CD8-positive, alpha-beta T cell (primary cell): ENCODE measurements at regions of chr1 and their contacts with region 1.

Region 1: DNA sequence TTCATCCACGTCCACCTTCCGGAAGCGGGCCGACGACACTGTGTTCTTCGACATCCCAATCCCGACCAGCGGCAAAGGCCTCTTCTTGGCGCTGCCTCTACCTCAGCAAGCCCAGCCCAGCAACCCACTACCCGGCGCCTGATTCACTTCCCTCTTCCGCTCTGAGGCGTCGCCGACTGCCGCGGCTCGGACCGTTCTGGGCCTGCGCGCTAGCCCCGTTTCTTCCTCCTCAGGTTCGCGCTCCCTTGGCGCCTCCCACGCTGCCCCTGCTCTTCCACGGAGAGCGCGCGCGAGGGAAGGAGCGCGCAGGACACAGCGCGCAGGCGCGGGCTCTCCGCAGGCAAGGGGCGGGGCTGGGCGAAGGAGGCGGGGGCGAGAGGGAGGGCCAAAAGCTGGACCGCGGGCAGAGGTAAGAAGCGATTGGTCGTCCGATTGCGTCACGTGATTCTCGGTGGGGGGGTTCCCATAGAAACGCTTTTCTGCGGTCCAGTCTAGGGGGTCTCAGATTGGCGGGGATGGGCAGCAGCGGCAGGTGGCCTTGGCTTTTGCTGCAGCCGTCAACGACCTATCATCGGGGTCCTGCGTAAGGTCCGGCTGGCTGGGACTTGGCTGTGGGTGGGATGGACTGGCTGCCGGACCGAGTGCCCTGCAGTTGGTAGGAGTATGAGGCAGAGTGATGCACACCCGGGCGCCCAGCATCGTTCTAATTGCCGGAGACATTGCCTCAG is at the start of gene ARPC5:
- DNase-seq: peak; percentile 89 to 98 (median 94)
- ATAC-seq: peak; percentile 85
- H3K4me3 ChIP-seq: peak within 1 kb of the TSS; percentile 82 to 94
- H3K4me3 Mint-ChIP-seq: peak within 1 kb of the TSS; percentile 100
- H3K27ac ChIP-seq: peak within 1 kb of the TSS; percentile 61 to 82
- H3K27ac Mint-ChIP-seq: peak within 1 kb of the TSS; percentile 99
- H3K4me1 ChIP-seq: peaks cover 31% of the 10 kb centered on the region
- H3K4me1 Mint-ChIP-seq: peaks cover 47% of the 10 kb centered on the region
- H3K27me3 ChIP-seq: no peaks in the 10 kb centered on the region
- H3K27me3 Mint-ChIP-seq: no peaks in the 10 kb centered on the region
- CTCF ChIP-seq: no peak
- total RNA-seq, gene ARPC5: 14.2 to 17.1 TPM

Region 2: DNA sequence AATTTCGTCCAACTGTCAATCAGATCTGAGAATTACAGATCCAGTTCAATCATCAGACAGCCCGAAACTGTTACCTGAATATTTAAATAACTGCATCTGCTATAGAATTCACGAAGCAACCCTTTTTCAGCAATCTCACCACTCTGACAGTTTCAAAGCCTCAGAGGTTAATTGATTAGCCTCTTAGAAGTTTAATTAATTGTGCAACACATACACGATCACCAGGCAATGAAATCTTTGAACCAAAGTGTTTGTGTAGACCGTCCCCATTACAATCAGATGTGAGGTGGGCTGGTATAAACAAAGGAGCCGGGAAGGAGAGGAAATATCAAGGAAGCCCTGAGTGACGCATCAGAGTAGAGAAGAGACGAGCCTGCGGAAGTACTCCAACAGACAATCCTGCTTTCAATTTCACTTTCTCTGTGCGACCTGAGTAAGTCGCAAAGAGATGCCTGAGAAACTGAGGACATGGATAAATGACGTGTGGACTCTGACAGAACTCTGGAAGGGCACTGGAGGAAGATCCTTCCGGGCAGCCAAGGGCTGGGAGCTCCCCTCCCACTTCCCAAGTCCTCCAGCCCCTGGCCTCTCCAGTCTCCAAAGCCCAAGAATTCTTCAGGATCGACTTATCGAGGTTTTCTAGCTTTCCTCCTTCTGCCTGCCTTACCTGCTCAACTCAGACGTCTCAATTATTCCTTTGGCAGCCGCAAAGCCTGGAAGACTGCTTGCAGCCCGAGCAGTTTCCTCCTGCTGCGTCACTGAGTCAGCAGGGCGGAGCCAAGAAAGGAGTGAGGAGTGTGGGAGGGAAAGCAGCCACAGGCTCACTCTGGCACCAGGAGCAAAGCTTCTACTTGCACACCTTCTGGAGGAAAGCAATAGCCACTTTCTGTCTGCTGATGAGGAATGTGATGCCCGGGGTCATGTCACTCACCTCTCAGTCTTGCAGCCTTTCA is 1047.0 kb before region 1 on chr1 and contains the start of gene RNASEL:
- CTCF ChIA-PET with region 1: no interaction called
- POLR2A ChIA-PET with region 1: no interaction called
- intact Hi-C with region 1: loop called in 1 of 2 experiments (anchors 5 kb)
- DNase-seq: peak; percentile 24 to 87 (median 51)
- ATAC-seq: peak; percentile 92
- H3K4me3 ChIP-seq: peak within 1 kb of the TSS; percentile 78 to 95
- H3K4me3 Mint-ChIP-seq: peak within 1 kb of the TSS; percentile 94
- H3K27ac ChIP-seq: peak within 1 kb of the TSS; percentile 96 to 99
- H3K27ac Mint-ChIP-seq: peak within 1 kb of the TSS; percentile 99
- H3K4me1 ChIP-seq: peaks cover 44% of the 10 kb centered on the region
- H3K4me1 Mint-ChIP-seq: peaks cover 52% of the 10 kb centered on the region
- H3K27me3 ChIP-seq: no peaks in the 10 kb centered on the region
- H3K27me3 Mint-ChIP-seq: peaks cover 3% of the 10 kb centered on the region
- CTCF ChIP-seq: no peak
- total RNA-seq, gene RNASEL: 1.5 to 1.7 TPM

Region 3: DNA sequence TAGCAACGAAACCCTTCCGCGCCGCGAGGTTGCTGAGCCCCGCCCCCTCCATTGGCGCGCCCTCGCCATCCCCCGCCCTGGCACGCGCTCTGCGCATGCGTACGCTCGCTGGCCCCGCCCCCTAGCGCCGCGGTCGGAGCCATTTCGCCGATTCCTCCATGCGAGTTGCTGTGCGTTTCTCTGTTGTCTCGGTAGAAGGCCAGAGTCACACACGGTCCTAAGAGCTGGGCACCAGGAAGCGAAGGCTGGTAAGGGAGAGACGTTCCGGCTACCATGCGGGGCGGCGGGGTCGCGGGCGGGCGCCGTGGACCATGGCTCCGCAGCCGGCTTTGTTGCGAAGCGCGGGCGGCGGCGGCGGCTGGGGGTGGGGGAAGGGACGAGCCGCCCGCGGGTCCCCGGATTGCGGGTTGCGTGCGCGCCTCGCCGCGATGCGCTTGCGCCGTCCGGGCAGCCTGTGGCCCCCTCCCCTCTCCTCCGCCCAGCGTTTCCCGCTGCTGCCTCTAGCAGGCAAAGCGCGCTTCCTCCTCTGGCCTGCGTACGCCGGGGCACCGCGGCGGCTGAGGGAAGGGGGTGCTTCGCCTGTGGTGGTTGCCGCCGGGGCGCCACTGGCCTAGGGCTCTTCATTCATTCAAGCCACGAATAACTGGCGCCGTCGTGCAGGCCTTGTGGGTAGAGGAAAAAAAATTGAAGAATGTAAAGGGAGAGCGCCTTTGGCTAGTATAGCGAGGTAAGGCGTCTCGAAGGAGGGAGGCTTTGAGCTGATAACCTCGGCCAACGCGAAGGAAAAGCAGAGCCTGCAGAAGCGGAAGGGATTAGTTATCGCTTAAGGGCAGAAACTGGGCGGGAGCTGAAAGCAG is 796.3 kb before region 1 on chr1 and contains the start of gene DHX9:
- CTCF ChIA-PET with region 1: no interaction called
- POLR2A ChIA-PET with region 1: interaction called, 3 read pairs
- intact Hi-C with region 1: loop called in 1 of 2 experiments (anchors 5 kb)
- DNase-seq: peak; percentile 93 to 99 (median 96)
- ATAC-seq: peak; percentile 84
- H3K4me3 ChIP-seq: peak within 1 kb of the TSS; percentile 69 to 87
- H3K4me3 Mint-ChIP-seq: peak within 1 kb of the TSS; percentile 95
- H3K27ac ChIP-seq: peak within 1 kb of the TSS; percentile 66 to 86
- H3K27ac Mint-ChIP-seq: peak within 1 kb of the TSS; percentile 98
- H3K4me1 ChIP-seq: peaks cover 36% of the 10 kb centered on the region
- H3K4me1 Mint-ChIP-seq: peaks cover 49% of the 10 kb centered on the region
- H3K27me3 ChIP-seq: no peaks in the 10 kb centered on the region
- H3K27me3 Mint-ChIP-seq: no peaks in the 10 kb centered on the region
- CTCF ChIP-seq: peak; percentile 28
- total RNA-seq, gene DHX9: 374 to 382 TPM

Region 4: GRCh38 chr1:183674339-183674738 is 38.6 kb after region 1 on chr1:
- CTCF ChIA-PET with region 1: no interaction called
- POLR2A ChIA-PET with region 1: no interaction called
- intact Hi-C with region 1: no loop called
- DNase-seq: no peak
- ATAC-seq: no peak
- H3K4me3 ChIP-seq: no peak overlapping the region
- H3K4me3 Mint-ChIP-seq: no peak overlapping the region
- H3K27ac ChIP-seq: no peak overlapping the region
- H3K27ac Mint-ChIP-seq: no peak overlapping the region
- H3K4me1 ChIP-seq: no peaks in the 10 kb centered on the region
- H3K4me1 Mint-ChIP-seq: no peaks in the 10 kb centered on the region
- H3K27me3 ChIP-seq: no peaks in the 10 kb centered on the region
- H3K27me3 Mint-ChIP-seq: peaks cover 12% of the 10 kb centered on the region
- CTCF ChIP-seq: no peak

Region 5: DNA sequence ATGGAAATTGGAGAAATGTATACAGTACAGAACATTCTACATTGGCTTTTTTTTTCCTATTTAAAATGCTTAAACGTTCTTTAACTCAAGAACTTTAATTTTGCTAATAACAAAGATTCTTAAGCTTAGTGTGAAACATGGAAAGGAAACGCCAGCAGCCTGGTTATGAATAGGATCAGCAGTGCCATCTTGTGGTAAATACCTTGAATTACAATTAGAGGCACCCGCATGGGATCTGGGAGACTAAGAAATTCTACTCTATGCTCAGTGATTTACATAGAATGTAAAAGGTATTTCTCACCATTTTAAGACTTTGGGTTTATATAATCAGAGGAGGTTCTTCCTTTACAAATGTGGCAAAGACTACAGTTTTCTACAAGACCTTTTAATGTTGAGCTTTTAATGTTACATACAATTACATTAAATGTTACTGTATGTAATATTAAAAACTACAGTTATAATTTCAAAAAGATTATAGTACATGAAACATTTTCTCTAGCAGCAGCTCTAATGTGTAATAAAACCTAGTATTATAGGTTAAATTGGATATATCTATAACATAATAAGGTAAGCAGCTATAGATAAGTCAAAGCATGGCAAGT is 49.4 kb after region 1 on chr1:
- CTCF ChIA-PET with region 1: interaction called, 6 read pairs
- POLR2A ChIA-PET with region 1: no interaction called
- intact Hi-C with region 1: loop called in 1 of 2 experiments (anchors 1 kb)
- DNase-seq: peak in 3 of 9 experiments; percentile 18 to 69 (median 58)
- ATAC-seq: peak; percentile 83
- H3K4me3 ChIP-seq: no peak overlapping the region
- H3K4me3 Mint-ChIP-seq: no peak overlapping the region
- H3K27ac ChIP-seq: no peak overlapping the region
- H3K27ac Mint-ChIP-seq: no peak overlapping the region
- H3K4me1 ChIP-seq: no peaks in the 10 kb centered on the region
- H3K4me1 Mint-ChIP-seq: peaks cover 4% of the 10 kb centered on the region
- H3K27me3 ChIP-seq: no peaks in the 10 kb centered on the region
- H3K27me3 Mint-ChIP-seq: peaks cover 5% of the 10 kb centered on the region
- CTCF ChIP-seq: peak; percentile 83

Region 6: GRCh38 chr1:183739741-183740271 is 104.0 kb after region 1 on chr1:
- CTCF ChIA-PET with region 1: no interaction called
- POLR2A ChIA-PET with region 1: no interaction called
- intact Hi-C with region 1: no loop called
- DNase-seq: no peak
- ATAC-seq: no peak
- H3K4me3 ChIP-seq: no peak overlapping the region
- H3K4me3 Mint-ChIP-seq: no peak overlapping the region
- H3K27ac ChIP-seq: no peak overlapping the region
- H3K27ac Mint-ChIP-seq: no peak overlapping the region
- H3K4me1 ChIP-seq: no peaks in the 10 kb centered on the region
- H3K4me1 Mint-ChIP-seq: no peaks in the 10 kb centered on the region
- H3K27me3 ChIP-seq: no peaks in the 10 kb centered on the region
- H3K27me3 Mint-ChIP-seq: no peaks in the 10 kb centered on the region
- CTCF ChIP-seq: no peak

Region 7: DNA sequence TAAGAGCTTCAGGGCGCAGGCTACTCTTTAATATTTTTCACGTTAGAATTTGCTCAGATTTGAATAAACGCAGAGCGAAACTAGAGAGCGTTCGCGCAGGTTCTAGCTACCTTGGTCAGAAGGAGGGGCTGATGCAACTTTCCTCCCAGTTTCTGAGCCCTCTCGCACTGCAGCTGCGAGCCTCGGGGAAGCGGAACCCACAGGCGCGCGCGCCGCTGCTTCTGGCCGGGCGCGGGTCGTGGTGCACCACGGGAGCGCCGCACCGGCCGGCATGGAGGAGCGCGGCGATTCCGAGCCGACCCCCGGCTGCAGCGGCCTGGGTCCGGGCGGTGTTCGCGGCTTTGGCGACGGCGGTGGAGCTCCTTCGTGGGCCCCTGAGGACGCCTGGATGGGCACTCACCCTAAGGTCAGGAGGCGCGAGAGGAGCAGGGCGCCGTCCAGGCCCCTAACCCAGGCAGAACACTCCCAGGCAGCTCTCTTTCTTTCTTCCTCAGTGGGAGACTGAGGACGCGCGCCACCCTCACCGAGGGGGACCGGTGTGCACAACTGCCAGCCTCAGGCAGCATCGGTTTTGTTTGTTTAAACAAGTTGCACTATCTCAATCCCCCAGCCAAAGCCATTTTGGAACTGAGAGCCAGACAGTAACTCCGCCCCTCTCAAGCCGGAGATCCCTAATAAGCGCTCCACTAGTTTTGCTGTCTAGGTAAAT is 415.9 kb after region 1 on chr1 and contains the start of gene TSEN15:
- CTCF ChIA-PET with region 1: no interaction called
- POLR2A ChIA-PET with region 1: no interaction called
- intact Hi-C with region 1: loop called (anchors 1 to 5 kb)
- DNase-seq: peak; percentile 49 to 89 (median 76)
- ATAC-seq: peak; percentile 95
- H3K4me3 ChIP-seq: peak within 1 kb of the TSS; percentile 86 to 94
- H3K4me3 Mint-ChIP-seq: peak within 1 kb of the TSS; percentile 98
- H3K27ac ChIP-seq: peak within 1 kb of the TSS; percentile 66 to 78
- H3K27ac Mint-ChIP-seq: peak within 1 kb of the TSS; percentile 98
- H3K4me1 ChIP-seq: peaks cover 21% of the 10 kb centered on the region
- H3K4me1 Mint-ChIP-seq: peaks cover 47% of the 10 kb centered on the region
- H3K27me3 ChIP-seq: no peaks in the 10 kb centered on the region
- H3K27me3 Mint-ChIP-seq: peaks cover 14% of the 10 kb centered on the region
- CTCF ChIP-seq: no peak
- total RNA-seq, gene TSEN15: 14.8 to 15.9 TPM

Region 8: GRCh38 chr1:185044981-185045813 is 1409.4 kb after region 1 on chr1 and contains the start of gene RNF2:
- CTCF ChIA-PET with region 1: no interaction called
- POLR2A ChIA-PET with region 1: no interaction called
- intact Hi-C with region 1: loop called (anchors 10 kb)
- DNase-seq: peak; percentile 61 to 95 (median 84)
- ATAC-seq: peak; percentile 91
- H3K4me3 ChIP-seq: peak within 1 kb of the TSS; percentile 74 to 85
- H3K4me3 Mint-ChIP-seq: peak within 1 kb of the TSS; percentile 92
- H3K27ac ChIP-seq: peak within 1 kb of the TSS; percentile 62 to 81
- H3K27ac Mint-ChIP-seq: peak within 1 kb of the TSS; percentile 93
- H3K4me1 ChIP-seq: peaks cover 23% of the 10 kb centered on the region
- H3K4me1 Mint-ChIP-seq: peaks cover 46% of the 10 kb centered on the region
- H3K27me3 ChIP-seq: no peaks in the 10 kb centered on the region
- H3K27me3 Mint-ChIP-seq: no peaks in the 10 kb centered on the region
- CTCF ChIP-seq: no peak
- total RNA-seq, gene RNF2: 13.3 to 13.6 TPM